ENCODE measurements at regions of chr3 and their contacts with region 1.

Region 1: DNA sequence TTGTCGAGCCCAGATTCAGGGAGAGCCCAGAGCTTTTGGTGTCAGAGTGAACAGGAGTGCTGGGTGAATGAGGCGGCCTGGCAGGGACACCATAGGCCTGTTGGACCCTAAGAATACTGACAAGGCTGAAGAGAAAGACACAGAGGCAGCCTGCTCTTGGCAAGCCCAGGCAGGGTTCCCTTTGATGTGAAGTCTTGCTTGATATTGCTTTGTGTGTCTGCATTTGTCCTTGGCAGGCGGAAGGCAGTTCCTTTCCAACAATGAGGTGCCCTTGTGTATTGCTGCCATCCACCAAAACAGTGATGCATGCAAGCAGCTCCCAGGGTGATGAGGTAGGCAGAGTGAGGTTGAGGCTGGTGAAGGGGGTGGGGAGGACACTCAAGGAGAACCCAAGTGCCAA is 152.7 kb upstream of the TSC22D2 start:
- DNase-seq: no peak
- H3K4me3 Mint-ChIP-seq: no peak overlapping the region
- H3K27ac Mint-ChIP-seq: no peak overlapping the region
- H3K4me1 Mint-ChIP-seq: no peaks in the 10 kb centered on the region
- H3K27me3 Mint-ChIP-seq: peaks cover 8% of the 10 kb centered on the region

Region 2: DNA sequence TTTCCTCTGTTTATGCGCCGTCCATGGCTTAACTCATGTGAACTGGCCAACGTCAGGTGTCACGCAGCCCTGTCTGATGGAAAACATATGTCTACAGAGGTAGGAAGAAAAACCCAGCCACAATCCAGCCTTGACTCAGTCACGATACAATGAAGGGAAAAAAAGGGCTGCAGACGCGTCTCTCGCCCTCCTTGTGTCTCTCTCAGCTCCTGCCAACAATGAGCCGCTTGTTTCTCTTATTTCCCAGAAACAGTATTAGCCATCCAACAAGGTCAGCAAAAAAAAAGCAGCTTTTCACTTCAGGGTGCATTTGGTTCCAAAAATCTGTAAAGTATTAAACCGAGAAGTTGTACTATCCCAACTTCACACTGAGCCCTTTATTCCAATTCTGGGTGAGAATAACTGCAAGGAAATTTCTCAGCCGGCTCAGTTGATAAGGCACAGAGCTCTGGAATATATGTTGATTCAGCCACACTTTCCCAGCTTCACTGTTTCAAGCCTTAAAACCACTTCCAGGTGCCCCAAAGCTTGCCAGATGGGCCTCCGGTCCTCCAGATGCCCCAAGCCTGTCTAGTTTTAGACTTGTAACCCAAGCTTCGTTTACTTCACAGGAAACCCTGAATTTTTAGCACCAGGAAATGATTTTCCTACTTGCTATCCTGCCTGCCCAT is 701.5 kb before region 1 on chr3:
- CTCF ChIA-PET with region 1: no interaction called
- POLR2A ChIA-PET with region 1: interaction called, 15 read pairs
- DNase-seq: no peak
- H3K4me3 Mint-ChIP-seq: no peak overlapping the region
- H3K27ac Mint-ChIP-seq: no peak overlapping the region
- H3K4me1 Mint-ChIP-seq: no peaks in the 10 kb centered on the region
- H3K27me3 Mint-ChIP-seq: peaks cover 26% of the 10 kb centered on the region

Region 3: DNA sequence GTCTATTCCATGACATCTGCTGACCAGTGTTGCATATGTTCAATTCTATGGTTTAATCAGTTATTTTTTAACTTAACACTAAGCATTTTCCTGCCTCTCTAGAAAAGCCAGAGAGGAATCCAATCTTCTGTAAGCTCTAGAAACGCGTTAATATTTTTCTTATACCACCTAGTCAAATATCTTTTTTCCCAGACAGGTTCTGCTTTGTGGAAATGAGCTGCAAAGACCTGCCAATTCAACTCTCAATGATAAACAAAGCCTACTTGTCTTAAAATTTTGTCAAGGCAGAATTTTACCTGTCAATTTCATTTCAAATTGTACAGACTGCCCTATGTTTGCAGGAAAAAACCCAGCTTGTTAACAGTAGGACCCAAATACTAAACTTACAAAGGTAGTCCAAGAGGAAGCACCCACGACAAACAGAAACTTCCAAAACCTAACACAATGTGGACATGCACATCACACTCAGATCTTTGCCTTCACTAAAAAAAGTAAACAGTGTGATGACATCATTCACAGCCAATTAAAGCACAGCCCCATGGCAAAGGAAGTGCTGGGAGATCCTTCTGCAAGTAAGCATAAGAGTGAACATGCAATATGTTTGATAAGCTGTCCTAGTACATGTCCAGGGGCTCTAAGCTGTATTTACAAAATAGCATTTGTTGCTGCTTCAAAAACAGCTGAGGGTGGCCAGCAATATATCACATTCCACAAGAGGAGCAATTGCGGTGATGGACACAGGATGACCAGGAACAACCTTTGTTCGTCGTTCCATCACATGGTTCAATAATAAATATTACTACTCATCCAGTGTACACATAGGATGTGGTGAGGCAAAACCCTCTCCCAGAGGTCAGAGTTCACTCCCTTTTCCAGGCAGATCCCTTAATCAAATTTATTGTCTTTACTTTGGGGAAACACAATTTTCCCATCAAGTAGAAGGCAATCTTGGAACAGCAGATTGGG is 13.3 kb after region 1 on chr3:
- CTCF ChIA-PET with region 1: no interaction called
- POLR2A ChIA-PET with region 1: no interaction called
- DNase-seq: no peak
- H3K4me3 Mint-ChIP-seq: no peak overlapping the region
- H3K27ac Mint-ChIP-seq: no peak overlapping the region
- H3K4me1 Mint-ChIP-seq: no peaks in the 10 kb centered on the region
- H3K27me3 Mint-ChIP-seq: peaks cover 10% of the 10 kb centered on the region

Measured in activated CD4-positive, alpha-beta T cell treated with anti-CD3 and anti-CD28 coated beads, Interleukin-2, amount 10 ng/mL, durations not matched to agents 7 days and 5 days (primary cell).